Dorsolateral prefrontal cortex (tissue), 120 donors: ENCODE measurements at regions of chr12 and their contacts with region 1.

Region 1: DNA sequence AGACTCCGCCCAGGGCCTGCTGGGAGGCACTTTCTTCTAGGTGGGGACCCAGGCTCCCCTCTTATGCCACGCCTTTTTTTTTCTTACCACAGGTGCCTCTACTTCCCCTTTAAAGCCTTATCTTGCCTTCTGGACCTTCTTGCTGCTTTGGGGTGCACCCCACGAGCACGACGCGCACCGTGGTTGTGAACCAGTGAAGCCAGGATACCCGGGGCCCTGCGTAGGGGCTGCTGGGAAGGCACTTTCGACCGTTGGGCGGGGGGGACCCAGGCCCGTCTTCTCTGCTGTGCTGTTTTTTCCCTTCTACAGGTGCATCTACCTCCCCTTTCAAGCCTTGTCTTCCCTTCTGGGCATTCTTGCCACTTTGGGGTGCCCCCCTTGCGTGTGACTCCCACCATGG is 305.4 kb downstream of the ALG10 start:
- DNase-seq: no peak
- H3K4me3 ChIP-seq: no peak overlapping the region
- H3K27ac ChIP-seq: no peak overlapping the region
- H3K27me3 ChIP-seq: peaks cover 0 to 90% (median 46%) of the 10 kb centered on the region in 45 donors
- CTCF ChIP-seq: no peak

Region 2: GRCh38 chr12:34054938-34055337 is 272.7 kb before region 1 on chr12:
- intact Hi-C with region 1: no loop called
- DNase-seq: no peak
- H3K4me3 ChIP-seq: peak overlapping the region in 2 of 59 donors; percentile 11 to 21
- H3K27ac ChIP-seq: peak overlapping the region in 4 of 59 donors; percentile 18 to 41 (median 26)
- H3K27me3 ChIP-seq: no peaks in the 10 kb centered on the region
- CTCF ChIP-seq: no peak

Region 3: DNA sequence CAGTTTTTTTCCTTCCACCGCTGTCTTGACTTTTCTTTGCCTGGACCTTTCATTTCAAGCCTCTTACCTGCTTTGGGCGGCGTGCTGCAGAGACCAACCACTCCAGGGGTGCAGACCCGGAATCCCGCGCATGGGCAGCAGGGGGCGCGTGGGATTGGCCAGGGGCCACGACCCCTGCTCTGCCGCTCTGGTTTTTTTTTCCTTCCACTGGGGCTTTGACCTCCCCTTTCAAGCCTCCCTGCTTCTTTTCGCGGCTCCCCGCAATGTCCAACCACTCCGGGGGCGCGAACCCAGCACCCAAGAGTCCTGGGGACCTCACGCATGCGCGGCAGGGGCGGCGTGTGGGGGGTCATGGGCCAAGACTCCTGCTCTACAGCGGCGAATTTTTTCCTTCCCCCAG is 19.7 kb after region 1 on chr12:
- intact Hi-C with region 1: loop called in 1 of 2 experiments (anchors 2 kb)
- DNase-seq: no peak
- H3K4me3 ChIP-seq: no peak overlapping the region
- H3K27ac ChIP-seq: no peak overlapping the region
- H3K27me3 ChIP-seq: peaks cover 0 to 98% (median 40%) of the 10 kb centered on the region in 45 donors
- CTCF ChIP-seq: no peak